AG04450 (cell line): ENCODE measurements at regions of chr4 and their contacts with region 1.

Region 1: GRCh38 chr4:2262143-2262943 is 434 bp upstream of the MXD4 start:
- DNase-seq: peak; percentile 99
- H3K4me3 ChIP-seq: peak overlapping the region; percentile 66
- H3K27ac ChIP-seq: peak overlapping the region; percentile 87
- H3K27me3 ChIP-seq: no peaks in the 10 kb centered on the region
- CTCF ChIP-seq: no peak

Region 2: GRCh38 chr4:2231082-2231481 is 31.3 kb before region 1 on chr4:
- CTCF ChIA-PET with region 1: no interaction called
- POLR2A ChIA-PET with region 1: no interaction called
- DNase-seq: no peak
- H3K4me3 ChIP-seq: no peak overlapping the region
- H3K27ac ChIP-seq: no peak overlapping the region
- H3K27me3 ChIP-seq: no peaks in the 10 kb centered on the region
- CTCF ChIP-seq: no peak

Region 3: GRCh38 chr4:2241410-2242353 is 20.7 kb before region 1 on chr4 and contains the starts of genes HAUS3 and POLN:
- CTCF ChIA-PET with region 1: no interaction called
- POLR2A ChIA-PET with region 1: interaction called, 10 read pairs
- DNase-seq: peak; percentile 94
- H3K4me3 ChIP-seq: peak within 1 kb of the TSS; percentile 89
- H3K27ac ChIP-seq: no peak within 1 kb of the TSS
- H3K27me3 ChIP-seq: no peaks in the 10 kb centered on the region
- CTCF ChIP-seq: no peak
- polyA plus RNA-seq, gene HAUS3: 3.1 and 6.0 TPM in 2 replicates
- polyA plus RNA-seq, gene POLN: 0.35 and 0.42 TPM in 2 replicates

Region 4: DNA sequence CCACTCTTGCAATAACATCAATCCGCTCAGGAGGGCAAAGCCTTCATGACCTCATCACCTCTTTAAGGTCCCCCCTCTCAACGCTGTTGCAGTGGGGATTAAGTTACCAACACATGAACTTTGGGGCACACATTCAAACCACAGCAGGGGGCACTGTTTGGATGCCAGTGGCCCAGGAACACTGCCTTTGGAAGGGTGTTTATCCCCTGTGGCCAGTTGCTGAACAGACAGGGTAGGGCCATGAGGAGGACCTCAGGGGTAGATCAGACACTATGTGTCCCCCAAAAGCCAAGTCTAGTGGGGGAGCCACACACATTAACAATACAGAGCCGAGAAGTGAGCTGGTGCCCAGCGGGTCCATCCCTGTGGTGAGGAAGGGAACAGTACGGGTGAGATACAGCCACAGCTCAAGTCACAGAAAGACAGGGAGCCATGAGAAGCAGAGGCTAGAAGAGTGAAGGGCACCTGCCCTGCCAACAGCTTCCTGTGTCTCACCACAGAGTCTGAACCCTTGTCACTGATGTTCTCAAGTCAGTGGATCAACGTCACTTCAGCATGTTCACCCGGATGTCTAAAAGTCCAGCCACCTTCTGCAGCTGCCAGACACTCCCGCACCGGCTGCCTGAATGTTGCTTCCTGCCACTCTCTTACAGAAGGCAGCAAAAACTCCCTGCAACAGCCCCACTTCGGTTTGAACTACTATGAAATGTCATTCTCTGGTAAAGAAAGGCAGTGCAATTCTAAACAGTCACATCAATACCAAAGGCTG is 19.4 kb after region 1 on chr4:
- CTCF ChIA-PET with region 1: no interaction called
- POLR2A ChIA-PET with region 1: no interaction called
- DNase-seq: no peak
- H3K4me3 ChIP-seq: no peak overlapping the region
- H3K27ac ChIP-seq: no peak overlapping the region
- H3K27me3 ChIP-seq: peaks cover 5% of the 10 kb centered on the region
- CTCF ChIP-seq: peak; percentile 18; the same call in 1 of the 2 replicates

Region 5: DNA sequence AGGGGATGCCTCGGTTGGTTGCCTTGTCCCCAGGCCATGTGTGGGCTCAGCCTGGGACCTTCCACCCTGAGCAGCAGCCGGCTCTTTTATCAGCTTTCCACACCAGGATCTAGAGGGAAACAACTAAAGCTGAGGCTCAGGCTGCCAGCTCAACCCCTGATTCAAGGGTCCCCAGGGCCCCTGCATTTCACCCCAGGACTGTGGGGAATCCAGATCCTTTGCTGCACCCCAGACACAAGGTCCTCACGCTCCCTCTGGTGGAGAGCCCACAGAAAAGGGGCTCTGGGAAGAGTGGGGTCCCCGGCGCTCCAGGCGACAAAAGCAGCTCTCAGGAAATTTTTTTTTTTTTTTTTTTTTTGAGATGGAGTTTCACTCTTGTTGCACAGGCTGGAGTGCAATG is 91.8 kb after region 1 on chr4:
- CTCF ChIA-PET with region 1: interaction called, 11 read pairs
- POLR2A ChIA-PET with region 1: interaction called, 8 read pairs
- DNase-seq: no peak
- H3K4me3 ChIP-seq: no peak overlapping the region
- H3K27ac ChIP-seq: no peak overlapping the region
- H3K27me3 ChIP-seq: peaks cover 7% of the 10 kb centered on the region
- CTCF ChIP-seq: peak; percentile 58